Activated T-helper 2 cell treated with anti-CD3 and anti-CD28 coated beads, Interferon-gamma antibody, Interleukin-2, Interleukin-4, amounts not matched to agents 10 μg/mL and 5 μg/mL and 100 μg/mL, durations not matched to agents 14 hours and 24 hours and 36 hours (primary cell): ENCODE measurements at regions of chr12 and their contacts with region 1.

Region 1: GRCh38 chr12:50597200-50598195 is 92.7 kb downstream of the DIP2B start:
- DNase-seq: peak; percentile 19
- H3K4me3 Mint-ChIP-seq: peak overlapping the region; percentile 10
- H3K27ac Mint-ChIP-seq: peak overlapping the region; percentile 47
- H3K4me1 Mint-ChIP-seq: peaks cover 27% of the 10 kb centered on the region
- H3K27me3 Mint-ChIP-seq: no peaks in the 10 kb centered on the region

Region 2: GRCh38 chr12:50533203-50533584 is 64.3 kb before region 1 on chr12:
- intact Hi-C with region 1: loop called (anchors 2 kb)
- DNase-seq: no peak
- H3K4me3 Mint-ChIP-seq: no peak overlapping the region
- H3K27ac Mint-ChIP-seq: no peak overlapping the region
- H3K4me1 Mint-ChIP-seq: peaks cover 31% of the 10 kb centered on the region
- H3K27me3 Mint-ChIP-seq: no peaks in the 10 kb centered on the region

Region 3: DNA sequence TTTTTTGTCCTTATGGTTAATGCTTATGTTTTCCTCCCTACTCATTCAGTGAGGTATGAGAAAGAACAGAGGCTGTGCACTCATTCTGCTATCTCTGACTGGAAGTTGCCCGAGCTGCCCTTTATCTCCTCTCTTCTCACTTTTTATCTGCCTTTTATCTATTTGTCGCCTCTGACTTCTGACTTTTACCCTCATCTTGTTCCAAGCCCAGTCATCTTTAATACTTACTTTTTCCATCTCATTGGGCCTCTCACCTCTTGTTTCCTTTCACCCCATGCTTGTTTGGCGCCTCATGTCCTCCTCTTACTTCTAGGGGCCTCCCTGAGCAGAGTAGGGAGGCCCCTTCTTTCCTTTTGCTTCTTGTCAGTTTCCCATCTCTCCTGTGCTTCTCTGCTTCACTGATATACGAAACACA is 42.0 kb before region 1 on chr12:
- intact Hi-C with region 1: loop called (anchors 2 kb)
- DNase-seq: no peak
- H3K4me3 Mint-ChIP-seq: peak overlapping the region; percentile 44
- H3K27ac Mint-ChIP-seq: peak overlapping the region; percentile 95
- H3K4me1 Mint-ChIP-seq: peaks cover 33% of the 10 kb centered on the region
- H3K27me3 Mint-ChIP-seq: no peaks in the 10 kb centered on the region

Region 4: GRCh38 chr12:50637870-50638481 is 40.5 kb after region 1 on chr12:
- intact Hi-C with region 1: loop called (anchors 5 kb)
- DNase-seq: no peak
- H3K4me3 Mint-ChIP-seq: no peak overlapping the region
- H3K27ac Mint-ChIP-seq: peak overlapping the region; percentile 7
- H3K4me1 Mint-ChIP-seq: peaks cover 43% of the 10 kb centered on the region
- H3K27me3 Mint-ChIP-seq: no peaks in the 10 kb centered on the region

Region 5: GRCh38 chr12:50690925-50691324 is 93.4 kb after region 1 on chr12:
- intact Hi-C with region 1: no loop called
- DNase-seq: no peak
- H3K4me3 Mint-ChIP-seq: no peak overlapping the region
- H3K27ac Mint-ChIP-seq: no peak overlapping the region
- H3K4me1 Mint-ChIP-seq: no peaks in the 10 kb centered on the region
- H3K27me3 Mint-ChIP-seq: no peaks in the 10 kb centered on the region